Kidney (tissue), 22 donors: ENCODE measurements at regions of chr15 and their contacts with region 1.

Region 1: DNA sequence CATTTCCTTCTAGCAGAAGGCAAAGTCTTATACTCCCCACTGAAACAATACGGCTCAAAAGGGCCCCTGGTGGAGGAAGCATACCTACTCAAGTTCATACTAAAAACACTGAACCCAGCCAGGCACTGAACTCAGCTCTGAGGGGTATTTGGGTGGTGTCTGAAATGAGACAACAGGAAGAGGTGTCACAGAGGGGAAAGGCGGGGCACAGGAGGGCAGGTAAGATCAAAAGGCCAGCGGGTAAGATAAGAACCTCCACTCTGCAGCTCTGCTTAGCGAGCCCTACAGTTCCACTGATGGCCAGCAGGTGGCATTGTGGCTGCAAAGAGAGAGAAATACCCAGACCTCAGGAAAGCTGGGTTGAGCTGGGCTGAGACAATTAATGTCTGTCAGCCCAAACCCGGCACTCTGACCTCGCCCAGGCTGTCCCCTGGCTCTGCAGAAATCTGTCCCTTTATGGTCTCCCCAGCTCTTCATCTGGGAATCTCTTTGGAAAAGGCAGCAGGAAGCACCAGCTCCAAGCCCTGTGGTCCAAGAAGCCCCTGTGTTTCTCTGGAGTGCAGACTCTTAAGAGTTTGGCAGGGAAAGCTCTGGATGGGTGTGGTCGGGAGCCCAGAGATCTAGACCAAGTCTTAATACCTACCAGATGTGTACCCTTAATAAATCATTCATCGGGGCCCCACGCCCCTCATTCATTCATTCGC is 8.4 kb downstream of the MFGE8 start:
- DNase-seq: peak; percentile 80 to 87 (median 84)
- H3K4me3 ChIP-seq: no peak overlapping the region
- H3K27ac ChIP-seq: no peak overlapping the region
- H3K4me1 ChIP-seq: no peaks in the 10 kb centered on the region
- H3K27me3 ChIP-seq: no peaks in the 10 kb centered on the region
- CTCF ChIP-seq: peak; percentile 97

Region 2: DNA sequence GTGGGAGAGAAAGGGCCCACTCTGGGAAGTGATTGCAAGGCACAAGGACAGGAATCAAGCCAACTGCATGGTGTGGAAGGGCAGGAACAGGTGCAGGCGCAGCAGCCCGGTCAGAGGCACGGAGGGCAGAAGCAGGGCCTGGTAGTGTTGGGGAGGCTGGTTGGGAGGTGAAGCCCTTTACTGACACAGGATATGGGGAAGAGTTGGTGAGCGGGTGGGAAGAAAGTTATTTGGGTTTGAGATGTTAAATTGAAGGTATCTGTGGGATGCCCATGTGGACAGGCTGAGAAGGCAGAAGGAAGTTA is 99.9 kb after region 1 on chr15:
- intact Hi-C with region 1: loop called (anchors 5 kb)
- DNase-seq: no peak
- H3K4me3 ChIP-seq: no peak overlapping the region
- H3K27ac ChIP-seq: no peak overlapping the region
- H3K4me1 ChIP-seq: no peaks in the 10 kb centered on the region
- H3K27me3 ChIP-seq: no peaks in the 10 kb centered on the region
- CTCF ChIP-seq: no peak

Region 3: DNA sequence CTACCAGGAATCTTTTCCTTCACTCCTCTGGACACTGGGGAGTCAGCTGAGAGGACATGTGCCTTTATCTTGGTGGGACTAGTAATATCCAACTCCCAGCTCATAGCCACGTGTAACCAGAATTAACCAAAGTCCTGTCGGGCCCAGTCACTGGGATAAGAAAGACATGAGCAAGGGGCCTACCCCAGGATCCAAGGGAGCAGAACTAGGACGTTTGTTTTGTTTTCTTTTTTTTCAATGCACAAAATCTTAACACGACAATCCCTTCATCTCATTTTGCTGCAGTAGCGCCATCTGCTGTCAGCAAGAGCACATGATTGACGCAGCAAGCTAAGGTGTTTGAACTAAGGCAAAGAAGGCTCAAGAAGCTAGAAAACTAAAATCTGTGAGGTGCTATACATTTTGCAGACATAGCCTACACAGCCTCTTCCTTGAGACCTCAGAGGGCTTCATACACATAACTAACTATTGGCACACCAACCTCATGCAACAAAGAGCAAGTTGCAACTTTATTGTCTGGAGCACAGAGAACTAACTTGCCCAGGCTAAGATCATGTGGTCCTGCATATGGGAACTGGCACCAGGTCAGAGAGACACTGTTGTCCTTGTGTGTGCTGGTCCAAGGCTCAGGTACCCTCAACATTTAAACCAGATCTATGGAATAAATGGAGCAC is 273.0 kb after region 1 on chr15:
- intact Hi-C with region 1: loop called (anchors 10 kb)
- DNase-seq: peak in 4 of 5 donors; percentile 67 to 93 (median 79)
- H3K4me3 ChIP-seq: no peak overlapping the region
- H3K27ac ChIP-seq: no peak overlapping the region
- H3K4me1 ChIP-seq: peaks cover 0 to 3% (median 2%) of the 10 kb centered on the region in 3 donors
- H3K27me3 ChIP-seq: no peaks in the 10 kb centered on the region
- CTCF ChIP-seq: peak; percentile 88